Endothelial cell of umbilical vein (primary cell): ENCODE measurements at regions of chr13 and their contacts with region 1.

Region 1: DNA sequence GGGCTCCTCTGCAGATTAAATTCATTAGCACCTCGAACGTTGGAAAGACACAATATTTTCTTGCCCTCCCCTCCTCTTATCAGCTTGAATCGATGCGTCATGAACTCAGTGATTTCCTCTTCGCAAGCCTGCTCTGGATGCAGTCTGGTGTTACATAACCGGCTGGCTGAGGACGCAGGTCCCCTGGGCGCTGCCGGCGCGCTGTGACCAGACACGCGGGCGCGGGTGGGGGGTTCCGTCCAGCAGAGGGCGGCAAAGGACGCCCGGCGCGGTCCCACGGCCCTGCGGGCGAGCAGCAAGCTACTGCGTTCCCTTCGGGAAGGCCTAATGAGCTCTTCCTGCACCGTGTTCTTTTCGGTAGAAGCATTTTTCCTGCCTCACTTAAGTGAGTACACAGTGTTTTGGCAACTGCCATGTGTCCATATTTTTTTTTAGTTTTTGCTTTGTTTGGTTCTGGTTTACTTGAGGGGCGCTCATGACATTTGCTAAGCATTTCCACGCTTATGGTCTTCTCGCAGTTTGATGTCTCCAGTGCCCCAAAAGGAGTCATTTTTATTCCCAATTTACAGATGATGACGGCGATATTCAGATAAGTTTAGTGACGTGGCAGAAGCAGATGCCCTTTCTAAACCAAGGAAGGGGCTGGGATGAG is 112.2 kb upstream of the MBNL2 start:
- DNase-seq: peak; percentile 93
- H3K4me3 ChIP-seq: no peak overlapping the region
- H3K27ac ChIP-seq: no peak overlapping the region
- H3K4me1 ChIP-seq: peaks cover 17% of the 10 kb centered on the region
- H3K27me3 ChIP-seq: no peaks in the 10 kb centered on the region
- CTCF ChIP-seq: peak; percentile 96 to 99
- POLR2A ChIP-seq: no peak

Region 2: GRCh38 chr13:96982672-96983071 is 127.3 kb before region 1 on chr13:
- CTCF ChIA-PET with region 1: no interaction called
- POLR2A ChIA-PET with region 1: no interaction called
- dilution Hi-C with region 1: no loop called
- intact Hi-C with region 1: no loop called
- DNase-seq: peak; percentile 89
- H3K4me3 ChIP-seq: no peak overlapping the region
- H3K27ac ChIP-seq: peak overlapping the region; percentile 36
- H3K4me1 ChIP-seq: peaks cover 21% of the 10 kb centered on the region
- H3K27me3 ChIP-seq: peaks cover 19 to 25% of the 10 kb centered on the region in 2 experiments
- CTCF ChIP-seq: no peak
- POLR2A ChIP-seq: no peak

Region 3: DNA sequence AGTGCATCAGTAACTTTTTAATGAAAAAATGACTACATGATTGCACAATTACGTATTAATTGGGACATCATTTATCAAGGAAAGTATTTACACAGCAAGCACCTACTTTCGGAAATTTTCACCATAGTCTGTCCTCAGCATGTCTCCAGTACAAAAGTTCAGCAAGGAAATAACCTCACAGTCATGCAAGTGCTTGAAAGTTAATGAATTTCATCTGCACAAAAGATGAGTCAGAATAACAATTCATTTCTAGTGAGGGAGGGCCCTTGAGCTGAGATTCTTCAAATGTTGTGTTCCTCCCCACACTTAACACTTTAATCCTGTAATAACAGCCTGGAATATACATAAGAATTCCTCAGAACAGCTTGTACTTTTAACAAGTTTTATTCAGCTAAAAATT is 66.7 kb before region 1 on chr13:
- CTCF ChIA-PET with region 1: interaction called, 10 read pairs
- POLR2A ChIA-PET with region 1: no interaction called
- dilution Hi-C with region 1: no loop called
- intact Hi-C with region 1: no loop called
- DNase-seq: peak; percentile 74
- H3K4me3 ChIP-seq: no peak overlapping the region
- H3K27ac ChIP-seq: peak overlapping the region; percentile 20
- H3K4me1 ChIP-seq: peaks cover 10% of the 10 kb centered on the region
- H3K27me3 ChIP-seq: no peaks in the 10 kb centered on the region
- CTCF ChIP-seq: no peak
- POLR2A ChIP-seq: no peak

Region 4: DNA sequence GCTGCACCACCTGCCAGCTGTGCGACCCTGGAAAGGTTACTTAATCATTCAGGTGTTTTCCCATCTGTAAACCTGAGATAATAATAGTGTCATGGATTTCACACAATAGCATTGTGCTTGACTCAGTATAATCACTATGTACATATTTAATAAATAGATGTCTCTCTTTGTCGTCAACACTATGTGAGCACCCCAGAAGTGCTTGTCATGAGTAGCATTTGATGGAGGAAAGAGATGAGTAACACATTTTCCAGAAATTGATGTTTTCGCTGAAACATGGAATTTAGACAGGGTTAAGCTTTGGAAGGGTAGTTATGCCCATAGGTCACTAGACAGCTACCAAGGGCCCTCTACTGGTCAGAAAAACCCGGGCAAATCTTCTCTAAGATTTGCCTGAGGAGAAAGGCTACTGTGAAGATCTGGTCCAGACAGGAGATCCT is 102.7 kb after region 1 on chr13:
- CTCF ChIA-PET with region 1: interaction called, 256 read pairs
- POLR2A ChIA-PET with region 1: no interaction called
- dilution Hi-C with region 1: loop called (anchors 25 kb)
- intact Hi-C with region 1: loop called (anchors 1 kb)
- DNase-seq: peak; percentile 56
- H3K4me3 ChIP-seq: no peak overlapping the region
- H3K27ac ChIP-seq: no peak overlapping the region
- H3K4me1 ChIP-seq: no peaks in the 10 kb centered on the region
- H3K27me3 ChIP-seq: no peaks in the 10 kb centered on the region
- CTCF ChIP-seq: peak; percentile 52 to 72
- POLR2A ChIP-seq: no peak

Region 5: DNA sequence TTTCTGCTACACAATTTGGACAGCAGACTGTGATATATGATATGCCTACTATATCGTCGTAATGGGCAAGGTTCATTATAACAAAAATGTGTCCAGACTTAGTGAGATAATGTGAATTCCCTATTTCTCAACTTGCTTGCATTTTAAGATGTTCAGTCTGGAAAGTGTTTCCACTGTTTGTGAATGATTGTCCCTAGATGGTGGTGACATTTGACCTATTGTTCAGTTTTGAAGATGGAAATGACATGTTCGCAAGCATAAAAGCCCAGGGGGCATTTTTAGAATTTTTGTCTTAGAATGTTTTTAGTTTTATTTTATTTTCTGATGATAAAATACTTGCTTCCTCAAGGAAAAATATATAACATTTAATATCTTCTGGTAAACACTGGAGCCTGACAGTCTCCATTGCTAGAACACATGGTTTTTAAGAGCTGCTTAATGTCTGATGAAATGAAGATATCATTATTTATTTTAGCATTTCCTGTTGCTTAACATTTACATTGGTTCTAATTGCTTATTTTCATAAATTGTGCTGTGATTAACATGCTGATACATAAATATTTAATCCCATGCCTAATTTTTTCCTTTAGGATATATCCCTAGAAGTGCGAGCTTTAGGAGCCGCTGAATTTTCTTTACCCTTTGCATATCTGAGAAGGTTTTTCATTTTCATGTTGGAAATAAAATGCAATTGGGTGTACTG is 139.3 kb after region 1 on chr13:
- CTCF ChIA-PET with region 1: interaction called, 13 read pairs
- POLR2A ChIA-PET with region 1: no interaction called
- dilution Hi-C with region 1: no loop called
- intact Hi-C with region 1: no loop called
- DNase-seq: no peak
- H3K4me3 ChIP-seq: no peak overlapping the region
- H3K27ac ChIP-seq: peak overlapping the region; percentile 39
- H3K4me1 ChIP-seq: peaks cover 63% of the 10 kb centered on the region
- H3K27me3 ChIP-seq: no peaks in the 10 kb centered on the region
- CTCF ChIP-seq: no peak
- POLR2A ChIP-seq: no peak

Region 6: DNA sequence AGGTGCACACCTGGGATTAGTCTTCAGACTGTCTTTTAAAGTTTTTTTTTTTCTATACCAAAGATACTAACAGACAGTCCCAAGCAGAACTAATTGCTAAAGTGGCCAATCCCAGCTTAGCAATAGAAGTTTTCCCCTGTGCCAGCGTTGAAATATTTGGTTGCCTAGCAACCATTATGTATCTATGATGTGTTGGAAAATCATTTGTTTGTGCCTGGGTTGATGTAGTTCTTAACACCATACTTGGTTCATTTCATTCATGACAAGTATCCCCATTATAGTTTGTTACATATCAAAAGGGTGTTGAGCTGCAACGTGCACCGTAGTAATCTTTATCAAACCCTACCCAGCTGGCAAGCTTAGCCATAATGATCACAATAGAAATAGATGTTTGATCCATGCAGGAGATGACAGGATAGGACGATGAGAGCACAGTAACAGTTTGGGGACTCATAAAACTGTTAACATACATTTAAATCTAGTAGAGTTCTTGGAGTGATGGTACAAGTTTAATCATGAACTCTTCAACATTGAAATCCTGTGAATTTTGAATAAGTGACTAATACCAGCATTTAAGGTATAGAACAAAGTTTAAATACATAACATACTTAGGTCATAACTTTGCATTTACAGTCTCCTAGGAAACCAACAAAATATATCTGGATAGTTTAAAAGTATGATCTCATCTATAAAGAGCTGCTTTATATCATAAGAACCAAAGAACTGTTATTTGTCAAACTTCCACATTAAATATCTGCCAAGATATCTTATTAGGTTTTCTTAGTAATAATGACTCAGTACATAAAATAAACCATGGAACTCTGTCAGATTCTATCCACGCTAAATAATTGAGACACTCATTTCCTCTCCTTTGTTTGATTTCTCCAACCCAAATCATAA is 185.6 kb after region 1 on chr13:
- CTCF ChIA-PET with region 1: interaction called, 14 read pairs
- POLR2A ChIA-PET with region 1: no interaction called
- dilution Hi-C with region 1: no loop called
- intact Hi-C with region 1: no loop called
- DNase-seq: peak; percentile 85
- H3K4me3 ChIP-seq: peak overlapping the region in 1 of 3 experiments; percentile 29
- H3K27ac ChIP-seq: peak overlapping the region; percentile 98
- H3K4me1 ChIP-seq: peaks cover 37% of the 10 kb centered on the region
- H3K27me3 ChIP-seq: no peaks in the 10 kb centered on the region
- CTCF ChIP-seq: no peak
- POLR2A ChIP-seq: peak; percentile 24

Region 7: DNA sequence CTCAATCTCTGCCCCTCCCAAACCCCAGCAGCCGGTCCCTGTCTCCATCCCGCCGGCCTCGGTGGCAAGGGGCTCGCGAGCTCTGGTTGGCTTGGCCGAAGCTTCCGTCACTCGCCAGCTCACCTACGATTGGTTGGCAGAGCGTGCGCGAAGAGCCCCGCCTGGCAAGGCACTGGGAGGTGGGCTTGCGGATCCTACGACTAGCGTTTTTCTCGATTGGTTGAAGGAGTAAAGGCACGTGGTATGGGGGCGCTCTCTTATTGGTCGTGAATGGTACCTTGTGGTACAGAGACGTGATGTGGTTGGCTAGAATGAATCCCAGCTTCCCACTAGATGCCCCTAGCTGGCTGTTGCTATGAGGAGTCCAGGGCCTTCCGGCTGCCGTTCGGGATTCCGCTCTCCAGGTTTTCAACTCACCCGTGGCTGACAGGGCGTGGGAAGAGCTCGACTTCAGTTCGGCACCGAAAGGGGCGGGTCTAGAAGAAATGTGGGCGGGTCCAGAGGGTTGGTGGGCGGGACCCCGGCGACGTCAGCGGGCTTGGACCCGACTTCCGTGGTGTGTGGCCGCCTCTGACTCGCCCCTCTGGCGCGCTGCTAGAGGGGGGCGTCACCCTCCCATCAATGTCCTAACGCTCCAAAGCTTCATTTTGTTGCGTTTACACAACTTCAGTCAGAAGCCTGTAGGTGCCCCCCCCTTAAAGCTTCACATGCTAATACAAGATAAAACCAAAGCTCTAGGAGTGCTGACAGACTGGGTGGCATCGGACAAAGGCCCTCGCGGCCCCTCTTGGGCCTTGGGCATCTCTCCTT is 323.2 kb after region 1 on chr13:
- CTCF ChIA-PET with region 1: interaction called, 16 read pairs
- POLR2A ChIA-PET with region 1: no interaction called
- dilution Hi-C with region 1: no loop called
- intact Hi-C with region 1: loop called (anchors 1 kb)
- DNase-seq: peak; percentile 100
- H3K4me3 ChIP-seq: peak overlapping the region; percentile 70 to 87 (median 76)
- H3K27ac ChIP-seq: peak overlapping the region; percentile 95
- H3K4me1 ChIP-seq: peaks cover 17% of the 10 kb centered on the region
- H3K27me3 ChIP-seq: no peaks in the 10 kb centered on the region
- CTCF ChIP-seq: no peak
- POLR2A ChIP-seq: peak; percentile 90